Activated CD8-positive, alpha-beta memory T cell treated with anti-CD3 and anti-CD28 coated beads, Interleukin-2, amount 10 ng/mL, durations not matched to agents 7 days and 5 days (primary cell): ENCODE measurements at regions of chr17 and their contacts with region 1.

Region 1: DNA sequence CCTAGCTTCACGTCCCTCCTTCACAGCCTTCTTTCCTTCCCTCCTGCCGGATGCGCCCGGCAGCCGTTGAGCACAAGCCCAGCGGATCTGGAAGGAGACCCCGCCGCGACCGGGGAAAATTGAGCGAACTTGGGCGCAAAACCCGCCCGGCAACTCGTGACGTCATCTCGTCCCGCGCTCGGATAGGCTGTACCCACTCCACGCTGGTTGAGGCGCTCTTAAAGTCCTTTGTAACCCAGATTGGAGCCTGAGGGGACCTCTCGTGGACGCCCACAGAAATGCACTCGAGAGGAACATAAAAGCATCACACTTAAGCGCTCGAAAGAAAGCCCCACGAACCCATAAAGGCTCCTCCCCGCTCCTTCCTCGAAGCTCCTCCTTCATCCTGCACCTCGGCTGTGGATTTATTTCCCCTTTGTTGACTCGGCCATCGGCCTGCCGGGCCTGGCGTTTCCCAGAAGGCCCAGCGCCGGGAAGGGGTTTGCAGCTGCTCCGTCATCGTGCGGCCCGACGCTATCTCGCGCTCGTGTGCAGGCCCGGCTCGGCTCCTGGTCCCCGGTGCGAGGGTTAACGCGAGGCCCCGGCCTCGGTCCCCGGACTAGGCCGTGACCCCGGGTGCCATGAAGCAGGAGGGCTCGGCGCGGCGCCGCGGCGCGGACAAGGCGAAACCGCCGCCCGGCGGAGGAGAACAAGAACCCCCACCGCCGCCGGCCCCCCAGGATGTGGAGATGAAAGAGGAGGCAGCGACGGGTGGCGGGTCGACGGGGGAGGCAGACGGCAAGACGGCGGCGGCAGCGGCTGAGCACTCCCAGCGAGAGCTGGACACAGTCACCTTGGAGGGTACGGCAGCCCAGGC is at the start of gene PSMD3:
- DNase-seq: peak; percentile 99
- ATAC-seq: peak; percentile 96
- H3K4me3 Mint-ChIP-seq: peak within 1 kb of the TSS; percentile 97
- H3K27ac Mint-ChIP-seq: peak within 1 kb of the TSS; percentile 88
- H3K4me1 Mint-ChIP-seq: peaks cover 34% of the 10 kb centered on the region
- H3K27me3 Mint-ChIP-seq: peaks cover 14% of the 10 kb centered on the region
- total RNA-seq, gene PSMD3: 106 to 138 TPM

Region 2: DNA sequence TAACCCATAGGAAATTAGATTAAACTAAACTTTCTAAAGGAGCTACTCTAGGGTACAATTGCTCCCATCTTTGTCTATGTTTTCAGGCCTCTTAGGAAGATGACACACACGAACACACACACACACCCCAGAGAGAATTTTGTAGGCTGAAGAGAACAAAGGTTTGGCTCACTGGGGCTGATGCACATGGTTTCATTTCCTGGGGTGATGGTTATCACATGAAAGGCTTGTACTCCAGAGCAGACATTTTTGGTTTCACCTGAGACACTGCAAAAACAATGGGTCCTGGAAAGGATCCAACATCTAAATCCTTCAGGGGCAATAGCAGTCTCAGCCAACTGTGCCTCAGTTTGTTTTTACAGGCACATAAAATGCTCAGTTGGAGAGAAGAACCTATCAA is 180.0 kb before region 1 on chr17:
- CTCF ChIA-PET with region 1: no interaction called
- DNase-seq: peak; percentile 69
- ATAC-seq: peak; percentile 94
- H3K4me3 Mint-ChIP-seq: peak overlapping the region; percentile 20
- H3K27ac Mint-ChIP-seq: peak overlapping the region; percentile 91
- H3K4me1 Mint-ChIP-seq: peaks cover 44% of the 10 kb centered on the region
- H3K27me3 Mint-ChIP-seq: no peaks in the 10 kb centered on the region

Region 3: GRCh38 chr17:39872751-39873150 is 107.8 kb before region 1 on chr17:
- CTCF ChIA-PET with region 1: interaction called, 18 read pairs
- DNase-seq: no peak
- ATAC-seq: no peak
- H3K4me3 Mint-ChIP-seq: no peak overlapping the region
- H3K27ac Mint-ChIP-seq: no peak overlapping the region
- H3K4me1 Mint-ChIP-seq: peaks cover 13% of the 10 kb centered on the region
- H3K27me3 Mint-ChIP-seq: peaks cover 4% of the 10 kb centered on the region

Region 4: GRCh38 chr17:39946551-39947330 is 33.8 kb before region 1 on chr17:
- CTCF ChIA-PET with region 1: no interaction called
- DNase-seq: no peak
- ATAC-seq: no peak
- H3K4me3 Mint-ChIP-seq: no peak overlapping the region
- H3K27ac Mint-ChIP-seq: no peak overlapping the region
- H3K4me1 Mint-ChIP-seq: peaks cover 6% of the 10 kb centered on the region
- H3K27me3 Mint-ChIP-seq: peaks cover 4% of the 10 kb centered on the region

Region 5: GRCh38 chr17:39963829-39964228 is 16.8 kb before region 1 on chr17:
- CTCF ChIA-PET with region 1: interaction called, 129 read pairs
- DNase-seq: no peak
- ATAC-seq: no peak
- H3K4me3 Mint-ChIP-seq: no peak overlapping the region
- H3K27ac Mint-ChIP-seq: no peak overlapping the region
- H3K4me1 Mint-ChIP-seq: peaks cover 19% of the 10 kb centered on the region
- H3K27me3 Mint-ChIP-seq: peaks cover 19% of the 10 kb centered on the region

Region 6: DNA sequence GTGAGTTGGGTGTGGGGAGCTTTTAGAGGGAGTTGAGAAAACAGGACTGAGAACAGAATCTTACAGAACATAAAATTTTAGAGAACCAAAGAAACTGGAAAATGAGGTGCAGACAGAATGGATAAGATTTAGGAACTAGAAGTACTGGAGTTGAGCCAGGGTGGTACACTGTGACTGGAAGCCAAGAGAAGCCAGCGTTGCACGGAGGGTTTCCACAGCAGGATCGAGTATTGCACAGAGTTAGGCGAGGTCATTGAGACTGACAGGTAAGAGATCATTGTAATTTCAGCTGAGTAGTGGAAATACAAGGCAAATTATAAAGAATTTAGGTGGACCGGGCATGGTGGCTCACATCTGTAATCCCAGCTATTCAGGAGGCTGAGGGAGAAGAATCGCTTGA is 11.2 kb before region 1 on chr17:
- CTCF ChIA-PET with region 1: interaction called, 129 read pairs
- DNase-seq: no peak
- ATAC-seq: no peak
- H3K4me3 Mint-ChIP-seq: no peak overlapping the region
- H3K27ac Mint-ChIP-seq: no peak overlapping the region
- H3K4me1 Mint-ChIP-seq: peaks cover 7% of the 10 kb centered on the region
- H3K27me3 Mint-ChIP-seq: peaks cover 59% of the 10 kb centered on the region

Region 7: GRCh38 chr17:40060887-40061608 is 80.5 kb after region 1 on chr17:
- CTCF ChIA-PET with region 1: no interaction called
- DNase-seq: no peak
- ATAC-seq: no peak
- H3K4me3 Mint-ChIP-seq: peak overlapping the region; percentile 69
- H3K27ac Mint-ChIP-seq: no peak overlapping the region
- H3K4me1 Mint-ChIP-seq: peaks cover 21% of the 10 kb centered on the region
- H3K27me3 Mint-ChIP-seq: peaks cover 26% of the 10 kb centered on the region